ENCODE measurements at regions of chr5 and their contacts with region 1.

Region 1: DNA sequence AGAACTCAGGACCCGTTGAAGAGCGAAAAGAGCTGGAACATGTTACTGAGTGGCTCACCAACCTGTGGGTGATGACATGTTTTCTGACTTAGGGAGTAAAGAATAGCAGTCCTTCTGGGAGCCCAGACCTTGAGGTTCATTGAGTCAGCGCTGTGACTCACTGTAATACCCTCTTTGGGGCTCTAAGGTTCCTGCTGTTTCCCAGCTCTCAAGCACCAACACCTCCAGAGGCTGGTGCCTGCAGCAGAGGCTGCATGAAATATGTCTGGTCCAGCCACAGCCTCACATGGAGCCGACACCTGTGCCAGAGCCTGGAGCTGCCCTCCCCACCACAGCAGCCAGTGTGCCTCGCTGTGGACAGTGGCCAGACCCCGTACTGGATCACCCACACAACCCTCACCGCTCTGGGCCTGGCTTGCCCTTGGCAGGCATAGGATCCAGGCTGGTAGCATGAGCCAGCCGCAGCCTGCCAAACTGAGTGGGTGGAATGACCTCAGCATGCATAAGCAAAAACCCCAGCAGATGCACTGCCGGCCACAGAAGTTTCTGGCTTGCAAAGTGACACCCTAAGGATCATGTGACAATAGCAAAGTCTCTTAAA is 143.5 kb upstream of the MRPS30 start:
- DNase-seq: peak; percentile 88
- H3K4me3 Mint-ChIP-seq: no peak overlapping the region
- H3K27ac Mint-ChIP-seq: peak overlapping the region; percentile 1
- H3K4me1 Mint-ChIP-seq: peaks cover 9% of the 10 kb centered on the region
- H3K27me3 Mint-ChIP-seq: no peaks in the 10 kb centered on the region
- CTCF ChIP-seq: no peak

Region 2: GRCh38 chr5:44546283-44546682 is 118.9 kb before region 1 on chr5:
- CTCF ChIA-PET with region 1: no interaction called
- POLR2A ChIA-PET with region 1: no interaction called
- intact Hi-C with region 1: loop called (anchors 5 kb)
- DNase-seq: peak; percentile 78
- H3K4me3 Mint-ChIP-seq: no peak overlapping the region
- H3K27ac Mint-ChIP-seq: peak overlapping the region; percentile 11
- H3K4me1 Mint-ChIP-seq: peaks cover 13% of the 10 kb centered on the region
- H3K27me3 Mint-ChIP-seq: no peaks in the 10 kb centered on the region
- CTCF ChIP-seq: no peak

Measured in MCF 10A (cell line).